Posterior vena cava (tissue), 2 donors: ENCODE measurements at regions of chr7 and their contacts with region 1.

Region 1: GRCh38 chr7:3923307-3923918 is 622.4 kb downstream of the SDK1 start:
- DNase-seq: no peak

Region 2: GRCh38 chr7:3861941-3862340 is 61.5 kb before region 1 on chr7:
- intact Hi-C with region 1: no loop called
- DNase-seq: peak; percentile 55

Region 3: DNA sequence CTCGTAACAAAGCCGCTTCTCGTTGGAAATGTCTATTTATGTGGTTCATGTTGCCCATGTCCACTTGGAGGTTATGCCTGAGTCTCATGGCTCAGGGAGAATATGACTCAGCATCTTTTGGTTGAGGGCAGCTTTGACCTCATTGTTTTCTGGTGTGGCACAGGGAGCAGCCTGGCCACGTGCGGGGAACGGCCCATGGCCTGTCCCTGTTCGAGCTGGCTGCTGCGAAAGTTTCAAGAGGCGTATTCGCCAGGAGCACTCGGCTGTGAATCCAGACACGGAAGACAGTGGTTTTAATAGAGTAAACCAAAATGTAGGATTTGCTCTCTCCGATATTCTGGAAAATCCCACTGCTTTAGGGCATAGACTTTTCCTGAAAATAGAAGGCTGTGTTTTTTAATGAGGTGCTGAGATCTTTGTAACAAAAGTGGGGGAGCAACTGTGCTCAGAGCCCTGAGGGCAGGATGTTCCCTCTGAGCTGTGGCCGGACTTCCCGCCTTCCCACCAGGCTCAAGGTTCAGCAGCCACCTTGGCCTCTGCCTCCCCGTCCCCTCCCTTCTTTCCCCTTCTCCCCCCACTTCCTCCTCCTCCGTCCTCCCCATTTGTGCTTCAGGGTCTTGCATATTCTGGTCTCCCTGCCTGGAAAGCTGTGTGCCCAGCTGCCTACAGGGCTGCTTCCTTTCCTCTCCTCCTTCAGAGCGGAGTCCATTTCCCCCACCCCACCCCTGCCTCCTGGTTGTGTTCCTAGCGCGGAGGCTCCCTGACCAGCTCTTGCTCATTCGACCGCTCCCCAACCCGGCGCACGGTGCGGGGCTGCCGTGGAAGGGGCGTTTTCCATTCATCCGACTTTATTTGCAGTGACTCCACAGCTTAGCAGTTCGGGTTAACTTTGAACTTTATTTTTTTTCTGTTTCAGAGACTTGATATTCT is 19.7 kb after region 1 on chr7:
- intact Hi-C with region 1: loop called in 1 of 2 experiments (anchors 1 kb)
- DNase-seq: no peak